OCI-LY7 (cell line): ENCODE measurements at regions of chr5 and their contacts with region 1.

Region 1: DNA sequence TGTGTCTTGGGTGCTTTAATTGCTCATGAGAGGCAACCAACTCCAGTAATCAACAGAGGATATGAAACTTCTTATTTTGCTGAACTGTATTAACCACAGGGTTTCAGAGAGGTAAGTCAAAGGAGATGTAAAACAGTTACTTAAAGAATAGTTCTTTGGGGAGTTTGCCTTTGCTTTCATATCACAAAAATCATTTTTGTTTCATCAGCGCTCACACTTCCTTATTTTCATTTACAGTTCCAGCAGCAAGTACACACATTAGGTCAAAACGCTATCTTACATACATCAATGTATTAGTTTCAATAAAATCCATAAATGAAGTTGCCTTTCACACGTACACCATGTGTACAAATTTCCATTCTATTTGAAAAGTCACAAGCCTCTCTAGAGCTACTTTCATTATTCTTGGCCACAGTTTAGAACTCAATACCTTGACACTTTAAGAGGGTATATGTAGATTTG is 50.1 kb downstream of the ST8SIA4 start:
- DNase-seq: peak; percentile 91
- H3K4me3 ChIP-seq: peak overlapping the region; percentile 54
- H3K27ac ChIP-seq: peak overlapping the region; percentile 98
- H3K4me1 ChIP-seq: peaks cover 75% of the 10 kb centered on the region
- CTCF ChIP-seq: no peak

Region 2: DNA sequence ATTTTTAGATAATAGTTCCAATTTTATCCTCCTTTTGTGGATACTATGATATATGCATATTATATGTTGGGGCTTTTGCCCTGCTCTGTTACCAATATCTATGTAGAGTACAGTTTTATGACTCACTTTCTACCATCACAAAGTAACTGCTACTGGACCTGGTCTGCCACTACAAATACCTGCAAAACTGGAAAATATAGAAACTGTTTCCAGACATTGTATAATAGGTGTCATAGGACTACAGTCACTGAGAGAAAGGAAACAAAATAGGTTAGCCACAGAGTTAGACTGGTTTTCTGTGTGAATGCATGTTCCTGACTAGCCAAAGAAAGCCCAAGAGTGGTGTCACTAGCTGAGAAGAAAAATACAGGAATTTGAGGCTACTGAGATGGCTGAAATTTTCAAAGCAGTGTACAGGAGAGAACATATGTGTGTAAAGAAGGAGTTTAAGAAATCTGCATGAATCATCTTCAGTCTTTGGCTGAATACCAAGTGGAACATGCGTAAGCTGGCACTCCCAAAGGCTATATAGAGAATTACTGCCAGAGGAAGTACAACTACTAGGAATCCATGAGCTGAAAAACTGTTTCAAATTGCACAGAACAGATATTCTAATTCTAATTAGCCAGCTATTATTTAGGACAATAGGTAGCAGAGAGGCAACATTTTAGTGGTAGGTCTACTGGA is 346.9 kb before region 1 on chr5:
- CTCF ChIA-PET with region 1: no interaction called
- POLR2A ChIA-PET with region 1: no interaction called
- intact Hi-C with region 1: no loop called
- DNase-seq: no peak
- H3K4me3 ChIP-seq: no peak overlapping the region
- H3K27ac ChIP-seq: no peak overlapping the region
- H3K4me1 ChIP-seq: no peaks in the 10 kb centered on the region
- CTCF ChIP-seq: no peak

Region 3: GRCh38 chr5:100840384-100840783 is 12.6 kb before region 1 on chr5:
- CTCF ChIA-PET with region 1: interaction called, 5 read pairs
- POLR2A ChIA-PET with region 1: interaction called, 59 read pairs
- intact Hi-C with region 1: no loop called
- DNase-seq: peak; percentile 40
- H3K4me3 ChIP-seq: peak overlapping the region; percentile 53
- H3K27ac ChIP-seq: peak overlapping the region; percentile 45
- H3K4me1 ChIP-seq: peaks cover 34% of the 10 kb centered on the region
- CTCF ChIP-seq: no peak

Region 4: GRCh38 chr5:100896054-100896453 is 43.0 kb after region 1 on chr5:
- CTCF ChIA-PET with region 1: interaction called, 4 read pairs
- POLR2A ChIA-PET with region 1: interaction called, 140 read pairs
- intact Hi-C with region 1: loop called (anchors 1 kb)
- DNase-seq: no peak
- H3K4me3 ChIP-seq: no peak overlapping the region
- H3K27ac ChIP-seq: no peak overlapping the region
- H3K4me1 ChIP-seq: peaks cover 74% of the 10 kb centered on the region
- CTCF ChIP-seq: no peak